Gastrocnemius medialis (tissue), 4 donors: ENCODE measurements at regions of chr9 and their contacts with region 1.

Region 1: GRCh38 chr9:85600675-85601263 is 141.0 kb downstream of the AGTPBP1 start:
- DNase-seq: peak in 1 of 2 donors; percentile 25
- ATAC-seq: peak in 1 of 2 donors; percentile 61
- H3K4me3 ChIP-seq: no peak overlapping the region
- H3K27ac ChIP-seq: no peak overlapping the region
- H3K4me1 ChIP-seq: peaks cover 0 to 11% of the 10 kb centered on the region in 2 donors
- H3K27me3 ChIP-seq: no peaks in the 10 kb centered on the region
- CTCF ChIP-seq: no peak
- POLR2A ChIP-seq: no peak

Region 2: GRCh38 chr9:84404095-84404686 is 1196.6 kb before region 1 on chr9:
- in situ Hi-C with region 1: loop called (anchors 10 to 25 kb)
- intact Hi-C with region 1: no loop called
- DNase-seq: no peak
- ATAC-seq: no peak
- H3K4me3 ChIP-seq: no peak overlapping the region
- H3K27ac ChIP-seq: no peak overlapping the region
- H3K4me1 ChIP-seq: no peaks in the 10 kb centered on the region
- H3K27me3 ChIP-seq: no peaks in the 10 kb centered on the region
- CTCF ChIP-seq: peak in 1 of 5 experiments; percentile 28
- POLR2A ChIP-seq: no peak